B cell (primary cell): ENCODE measurements at regions of chr9 and their contacts with region 1.

Region 1: GRCh38 chr9:94259077-94259892 is at the start of gene ZNF169:
- DNase-seq: peak; percentile 85
- ATAC-seq: peak; percentile 100
- H3K4me3 ChIP-seq: peak within 1 kb of the TSS; percentile 79 to 100 (median 82)
- H3K4me3 Mint-ChIP-seq: peak within 1 kb of the TSS; percentile 97
- H3K27ac ChIP-seq: peak within 1 kb of the TSS; percentile 26 to 77
- H3K27ac Mint-ChIP-seq: peak within 1 kb of the TSS; percentile 96
- H3K4me1 ChIP-seq: peaks cover 7 to 19% of the 10 kb centered on the region in 2 donors
- H3K4me1 Mint-ChIP-seq: peaks cover 28% of the 10 kb centered on the region
- H3K27me3 ChIP-seq: peaks cover 0 to 6% (median 4%) of the 10 kb centered on the region in 4 experiments
- H3K27me3 Mint-ChIP-seq: peaks cover 3% of the 10 kb centered on the region
- CTCF ChIP-seq: no peak
- total RNA-seq, gene ZNF169: 26.2 and 26.9 TPM in 2 replicates

Region 2: DNA sequence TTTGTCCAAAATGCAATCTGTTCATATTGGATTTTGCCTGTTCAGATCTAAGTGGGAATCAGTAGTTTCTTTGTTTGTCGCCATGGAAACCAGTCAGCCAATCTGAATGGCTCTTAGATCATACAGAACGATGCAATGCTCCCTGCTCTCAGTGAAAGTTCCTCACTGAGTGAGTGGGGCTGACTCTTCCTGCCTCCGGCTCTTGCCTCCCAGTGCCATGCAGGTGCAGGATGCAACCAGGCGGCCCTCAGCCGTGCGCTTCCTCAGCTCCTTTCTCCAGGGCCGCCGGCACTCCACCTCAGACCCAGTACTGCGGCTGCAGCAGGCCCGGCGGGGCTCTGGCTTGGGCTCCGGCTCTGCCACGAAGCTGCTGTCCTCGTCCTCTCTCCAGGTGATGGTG is 175.0 kb before region 1 on chr9 and contains the start of gene PTPDC1:
- CTCF ChIA-PET with region 1: no interaction called
- POLR2A ChIA-PET with region 1: no interaction called
- intact Hi-C with region 1: no loop called
- DNase-seq: no peak
- ATAC-seq: no peak
- H3K4me3 ChIP-seq: no peak within 1 kb of the TSS
- H3K4me3 Mint-ChIP-seq: no peak within 1 kb of the TSS
- H3K27ac ChIP-seq: no peak within 1 kb of the TSS
- H3K27ac Mint-ChIP-seq: no peak within 1 kb of the TSS
- H3K4me1 ChIP-seq: no peaks in the 10 kb centered on the region
- H3K4me1 Mint-ChIP-seq: no peaks in the 10 kb centered on the region
- H3K27me3 ChIP-seq: no peaks in the 10 kb centered on the region
- H3K27me3 Mint-ChIP-seq: no peaks in the 10 kb centered on the region
- CTCF ChIP-seq: no peak
- total RNA-seq, gene PTPDC1: 9.8 and 11.4 TPM in 2 replicates

Region 3: GRCh38 chr9:94464790-94465189 is 205.5 kb after region 1 on chr9:
- CTCF ChIA-PET with region 1: no interaction called
- POLR2A ChIA-PET with region 1: no interaction called
- intact Hi-C with region 1: no loop called
- DNase-seq: no peak
- ATAC-seq: no peak
- H3K4me3 ChIP-seq: no peak overlapping the region
- H3K4me3 Mint-ChIP-seq: no peak overlapping the region
- H3K27ac ChIP-seq: no peak overlapping the region
- H3K27ac Mint-ChIP-seq: no peak overlapping the region
- H3K4me1 ChIP-seq: no peaks in the 10 kb centered on the region
- H3K4me1 Mint-ChIP-seq: no peaks in the 10 kb centered on the region
- H3K27me3 ChIP-seq: no peaks in the 10 kb centered on the region
- H3K27me3 Mint-ChIP-seq: no peaks in the 10 kb centered on the region
- CTCF ChIP-seq: no peak

Region 4: DNA sequence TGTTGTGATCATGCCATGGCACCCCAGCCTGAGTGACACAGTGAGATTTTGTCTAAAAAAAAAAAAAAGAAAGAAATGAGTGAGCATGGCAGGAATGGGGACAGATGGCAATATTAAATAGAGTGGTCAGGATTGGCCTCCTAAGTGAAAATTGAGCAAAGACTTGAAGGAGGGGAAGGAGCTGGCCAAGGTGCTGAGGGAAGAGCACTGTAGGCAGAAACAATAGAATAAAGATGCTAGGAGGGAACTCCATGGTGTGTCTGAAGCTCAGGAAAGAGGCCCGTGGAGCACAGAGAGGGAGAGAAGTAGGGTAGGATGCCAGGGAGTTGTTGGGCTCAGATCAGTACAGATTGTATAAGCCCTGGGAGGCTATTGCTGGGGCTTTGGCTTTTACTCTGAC is 231.2 kb after region 1 on chr9:
- CTCF ChIA-PET with region 1: no interaction called
- POLR2A ChIA-PET with region 1: no interaction called
- intact Hi-C with region 1: no loop called
- DNase-seq: no peak
- ATAC-seq: no peak
- H3K4me3 ChIP-seq: no peak overlapping the region
- H3K4me3 Mint-ChIP-seq: no peak overlapping the region
- H3K27ac ChIP-seq: no peak overlapping the region
- H3K27ac Mint-ChIP-seq: no peak overlapping the region
- H3K4me1 ChIP-seq: no peaks in the 10 kb centered on the region
- H3K4me1 Mint-ChIP-seq: no peaks in the 10 kb centered on the region
- H3K27me3 ChIP-seq: peaks cover 0 to 4% (median 0%) of the 10 kb centered on the region in 4 experiments
- H3K27me3 Mint-ChIP-seq: peaks cover 22% of the 10 kb centered on the region
- CTCF ChIP-seq: no peak

Region 5: DNA sequence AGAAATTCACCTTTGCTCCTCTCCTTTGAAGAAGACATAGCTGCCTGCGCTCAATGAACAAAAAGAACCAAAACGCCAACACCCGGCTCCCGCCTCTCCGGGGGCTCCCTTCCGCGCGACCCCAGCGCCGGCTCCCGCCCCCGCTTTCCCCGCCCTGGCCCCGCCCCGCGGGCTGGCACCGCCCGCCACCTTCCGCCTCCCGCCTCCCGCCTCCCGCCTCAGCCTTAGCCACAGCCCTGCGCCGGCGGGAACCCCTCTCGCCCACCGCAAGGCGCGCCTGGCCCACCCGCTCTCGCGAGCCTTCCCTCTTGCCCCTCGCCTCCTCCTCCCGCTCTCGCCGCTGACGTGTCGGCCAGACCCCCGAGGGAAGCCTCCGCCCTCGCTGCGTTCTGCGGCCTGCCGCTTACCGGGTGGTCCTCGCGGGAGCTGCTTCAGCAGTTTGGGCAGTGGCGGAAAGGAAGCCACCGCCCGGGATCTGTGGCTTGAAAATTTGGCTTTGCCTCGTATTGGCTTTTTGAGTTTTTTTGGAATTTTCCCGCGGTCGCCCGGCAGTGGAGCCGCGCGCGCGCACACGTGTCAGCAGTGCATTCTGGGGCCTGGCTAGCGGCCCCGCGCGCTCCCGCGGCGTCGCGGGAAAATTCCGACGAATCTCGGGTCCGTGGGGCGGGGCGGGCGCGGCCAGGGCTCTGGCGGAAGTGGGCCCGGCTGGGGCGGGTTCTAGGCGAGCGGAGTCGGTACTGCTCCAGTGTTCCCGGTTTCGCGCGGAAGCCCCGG is 1058.0 kb after region 1 on chr9 and contains the start of gene FANCC:
- CTCF ChIA-PET with region 1: no interaction called
- POLR2A ChIA-PET with region 1: no interaction called
- intact Hi-C with region 1: loop called (anchors 2 kb)
- DNase-seq: peak; percentile 92
- ATAC-seq: peak; percentile 82
- H3K4me3 ChIP-seq: peak within 1 kb of the TSS; percentile 72 to 98 (median 94)
- H3K4me3 Mint-ChIP-seq: peak within 1 kb of the TSS; percentile 94
- H3K27ac ChIP-seq: peak within 1 kb of the TSS; percentile 74 to 84
- H3K27ac Mint-ChIP-seq: peak within 1 kb of the TSS; percentile 93
- H3K4me1 ChIP-seq: peaks cover 14 to 16% of the 10 kb centered on the region in 2 donors
- H3K4me1 Mint-ChIP-seq: peaks cover 16% of the 10 kb centered on the region
- H3K27me3 ChIP-seq: peaks cover 0 to 6% (median 5%) of the 10 kb centered on the region in 4 experiments
- H3K27me3 Mint-ChIP-seq: peaks cover 4% of the 10 kb centered on the region
- CTCF ChIP-seq: no peak
- total RNA-seq, gene FANCC: 11.1 and 13.7 TPM in 2 replicates